Left colon (tissue), 2 donors: ENCODE measurements at regions of chr3 and their contacts with region 1.

Region 1: DNA sequence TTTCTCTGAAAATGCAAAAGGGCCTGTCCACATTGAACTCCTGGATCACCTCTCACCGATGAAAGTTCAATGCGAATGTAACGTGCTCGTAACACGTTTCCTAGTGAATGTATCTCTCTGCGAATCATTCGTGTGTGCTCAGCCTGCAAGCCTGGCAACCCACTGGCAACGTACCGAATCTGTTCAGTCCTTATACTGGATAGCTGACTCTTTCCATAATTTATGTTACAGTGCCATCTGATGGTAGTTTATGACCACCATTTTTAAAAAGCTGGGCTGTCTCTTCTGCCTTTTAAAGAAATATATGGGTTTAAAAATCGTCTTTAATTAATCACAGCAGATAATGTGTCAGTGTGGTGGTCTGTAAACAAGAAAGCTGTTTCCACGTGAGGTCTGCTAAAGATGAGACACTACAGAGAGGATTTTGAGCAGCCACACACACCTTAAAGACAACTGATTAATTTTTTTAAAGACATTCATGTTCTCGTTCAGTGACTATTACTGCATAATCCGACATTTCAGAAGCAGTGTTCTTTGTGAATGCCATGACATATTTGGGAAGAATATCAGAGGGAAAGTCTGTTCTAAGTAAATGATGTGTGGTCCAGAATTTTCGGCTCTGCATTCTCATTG is 69.4 kb upstream of the FOXP1 start:
- DNase-seq: peak; percentile 43 to 45
- ATAC-seq: peak; percentile 93

Region 2: DNA sequence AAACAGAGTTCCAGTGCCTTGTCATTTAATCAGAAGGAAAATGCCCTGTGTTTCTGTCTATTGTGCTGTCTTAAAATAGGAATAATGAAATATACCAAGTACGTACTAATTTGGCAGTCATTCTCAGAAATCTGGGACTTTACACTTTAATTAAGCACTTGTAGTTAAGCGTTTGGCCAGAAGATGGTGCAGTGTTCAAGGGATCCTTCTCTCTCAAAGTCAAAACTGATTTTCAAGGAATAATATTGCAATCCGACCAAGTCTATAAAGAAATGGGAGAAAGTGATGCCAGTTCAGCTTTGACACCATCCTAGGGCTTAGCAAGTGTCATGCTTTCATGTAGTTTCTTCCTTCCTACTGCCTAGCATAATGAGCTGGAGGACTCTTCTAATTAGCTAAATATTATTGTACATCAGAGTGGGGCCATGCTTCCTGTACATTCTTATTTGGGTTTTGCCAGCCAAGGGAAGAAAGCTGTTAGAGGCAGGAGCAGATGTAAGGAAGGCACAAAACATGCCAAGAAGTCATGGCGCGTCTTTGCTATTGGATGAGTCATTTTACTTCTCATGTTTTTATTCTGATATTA is 1588.6 kb before region 1 on chr3:
- intact Hi-C with region 1: loop called in 1 of 2 experiments (anchors 10 kb)
- DNase-seq: no peak
- ATAC-seq: no peak

Region 3: GRCh38 chr3:70550723-70551319 is 1102.1 kb before region 1 on chr3:
- intact Hi-C with region 1: loop called in 1 of 2 experiments (anchors 5 kb)
- DNase-seq: peak; percentile 45 to 81
- ATAC-seq: peak; percentile 91

Region 4: DNA sequence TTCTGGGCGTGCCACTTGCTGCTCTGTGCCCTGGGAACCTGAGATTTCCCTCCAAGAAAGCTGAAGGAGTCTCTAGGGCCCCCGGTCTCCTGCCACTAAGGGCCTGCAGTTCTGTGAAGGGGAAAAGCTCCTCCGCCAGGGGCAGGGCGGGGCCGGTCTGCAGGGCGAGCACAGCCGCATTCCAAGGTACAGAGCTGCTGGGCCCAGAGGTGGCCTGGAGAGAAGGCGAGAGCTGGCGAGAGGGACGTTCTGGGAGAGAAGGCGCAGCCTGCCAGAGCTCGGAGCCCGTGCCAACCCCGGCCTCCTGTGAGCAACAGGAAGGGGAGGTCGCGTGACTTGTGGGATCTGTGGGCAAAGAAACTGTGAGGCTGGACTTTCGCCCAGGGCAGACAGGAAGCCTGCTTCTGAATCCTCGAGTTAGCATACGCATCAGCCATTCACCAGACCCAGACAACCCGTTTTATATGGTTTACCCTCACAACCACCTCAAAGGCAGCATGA is 695.0 kb after region 1 on chr3:
- intact Hi-C with region 1: no loop called
- DNase-seq: peak; percentile 77 to 86
- ATAC-seq: peak; percentile 97